ENCODE measurements at regions of chr7 and their contacts with region 1.

Region 1: GRCh38 chr7:99079104-99079503 is 64.8 kb downstream of the SMURF1 start:
- DNase-seq: no peak
- H3K4me3 Mint-ChIP-seq: no peak overlapping the region
- H3K27ac Mint-ChIP-seq: no peak overlapping the region
- H3K4me1 Mint-ChIP-seq: peaks cover 18% of the 10 kb centered on the region
- H3K27me3 Mint-ChIP-seq: no peaks in the 10 kb centered on the region

Region 2: DNA sequence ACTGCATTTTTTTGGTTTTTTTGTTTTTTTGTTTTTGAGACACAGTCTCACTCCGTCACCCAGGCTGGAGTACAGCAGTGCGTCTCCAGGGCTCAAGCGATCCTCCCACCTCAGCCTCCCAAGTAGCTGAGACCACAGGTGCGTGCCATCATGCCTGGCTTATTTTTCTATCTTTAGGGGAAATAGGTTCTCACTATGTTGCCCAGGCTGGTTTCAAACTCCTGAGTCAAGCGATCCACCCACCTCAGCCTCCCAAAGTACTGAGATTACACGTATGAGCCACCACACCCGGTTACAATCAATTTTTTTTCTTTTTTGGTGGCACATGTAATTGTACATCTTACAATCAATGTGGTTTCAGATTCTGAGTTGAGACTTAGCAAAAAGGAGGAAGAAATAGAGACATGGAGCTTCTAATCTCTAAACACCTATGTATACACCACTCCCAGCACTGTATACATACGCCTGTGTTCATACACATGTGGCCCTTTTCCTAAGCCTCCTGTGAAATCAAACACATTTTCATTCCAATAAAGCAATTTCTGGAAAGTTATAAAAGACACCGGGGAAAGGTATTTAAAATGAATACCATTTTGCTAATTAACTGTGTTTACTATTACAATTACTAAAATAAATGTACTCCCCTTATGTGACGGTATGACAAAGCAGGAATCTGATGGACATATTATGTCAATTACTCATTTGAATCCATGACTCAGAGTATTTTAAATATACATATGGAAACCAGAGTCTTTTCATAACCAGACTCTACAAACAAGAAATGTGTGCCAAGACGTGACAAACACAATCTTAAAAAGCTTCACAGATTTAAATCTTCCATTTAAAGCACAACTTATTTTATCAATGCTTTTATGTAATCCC is 23.9 kb after region 1 on chr7:
- intact Hi-C with region 1: loop called (anchors 2 kb)
- DNase-seq: no peak
- H3K4me3 Mint-ChIP-seq: no peak overlapping the region
- H3K27ac Mint-ChIP-seq: peak overlapping the region; percentile 15
- H3K4me1 Mint-ChIP-seq: peaks cover 23% of the 10 kb centered on the region
- H3K27me3 Mint-ChIP-seq: no peaks in the 10 kb centered on the region